Activated T-helper 1 cell treated with anti-CD3 and anti-CD28 coated beads, Interleukin-12 subunit alpha, Interleukin-12 subunit beta, Interleukin-2, Interleukin-4 antibody, amounts not matched to agents 30 ng/mL and 10 ng/mL and 1 ng/mL, durations not matched to agents 14 hours and 24 hours and 36 hours (primary cell): ENCODE measurements at regions of chr13 and their contacts with region 1.

Region 1: DNA sequence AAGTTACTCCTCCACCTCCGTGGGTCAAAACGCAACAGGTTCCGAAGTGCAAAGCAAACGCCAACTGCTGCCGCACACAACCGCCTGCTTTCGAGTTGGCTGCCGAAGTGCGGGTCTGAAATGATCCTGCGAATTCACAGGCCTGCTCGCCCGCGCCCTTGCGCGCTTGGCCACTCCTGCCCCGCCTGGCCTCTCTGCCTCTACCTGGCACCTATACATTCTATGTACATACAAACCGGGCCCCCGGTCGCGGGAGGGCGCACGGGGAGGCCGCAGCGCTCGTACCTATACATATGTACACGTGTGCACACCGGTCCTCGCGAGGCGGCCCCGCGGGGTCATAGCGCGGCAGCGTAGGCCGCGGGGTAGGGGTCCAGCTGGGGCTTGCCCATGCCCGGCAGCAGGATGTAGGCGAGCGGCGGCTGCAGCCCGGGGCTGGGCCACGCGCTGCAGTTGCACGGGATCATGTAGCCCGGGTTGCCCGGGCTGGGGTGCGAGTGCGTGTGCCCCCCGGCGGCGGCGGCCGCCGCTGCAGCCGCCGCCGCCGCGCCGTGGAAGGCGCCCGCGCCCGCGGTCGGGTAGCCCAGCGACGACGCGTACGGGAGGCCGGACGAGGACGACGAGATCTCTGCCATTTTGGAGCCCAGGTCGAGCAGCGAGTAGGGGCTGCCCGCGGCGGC is 1.3 kb downstream of the SOX21 start:
- DNase-seq: no peak
- H3K4me3 Mint-ChIP-seq: no peak overlapping the region
- H3K27ac Mint-ChIP-seq: peak overlapping the region; percentile 73
- H3K4me1 Mint-ChIP-seq: peaks cover 10% of the 10 kb centered on the region
- H3K27me3 Mint-ChIP-seq: peaks cover 73% of the 10 kb centered on the region

Region 2: GRCh38 chr13:93279982-93280381 is 1431.0 kb before region 1 on chr13:
- intact Hi-C with region 1: no loop called
- DNase-seq: no peak
- H3K4me3 Mint-ChIP-seq: no peak overlapping the region
- H3K27ac Mint-ChIP-seq: no peak overlapping the region
- H3K4me1 Mint-ChIP-seq: no peaks in the 10 kb centered on the region
- H3K27me3 Mint-ChIP-seq: no peaks in the 10 kb centered on the region

Region 3: DNA sequence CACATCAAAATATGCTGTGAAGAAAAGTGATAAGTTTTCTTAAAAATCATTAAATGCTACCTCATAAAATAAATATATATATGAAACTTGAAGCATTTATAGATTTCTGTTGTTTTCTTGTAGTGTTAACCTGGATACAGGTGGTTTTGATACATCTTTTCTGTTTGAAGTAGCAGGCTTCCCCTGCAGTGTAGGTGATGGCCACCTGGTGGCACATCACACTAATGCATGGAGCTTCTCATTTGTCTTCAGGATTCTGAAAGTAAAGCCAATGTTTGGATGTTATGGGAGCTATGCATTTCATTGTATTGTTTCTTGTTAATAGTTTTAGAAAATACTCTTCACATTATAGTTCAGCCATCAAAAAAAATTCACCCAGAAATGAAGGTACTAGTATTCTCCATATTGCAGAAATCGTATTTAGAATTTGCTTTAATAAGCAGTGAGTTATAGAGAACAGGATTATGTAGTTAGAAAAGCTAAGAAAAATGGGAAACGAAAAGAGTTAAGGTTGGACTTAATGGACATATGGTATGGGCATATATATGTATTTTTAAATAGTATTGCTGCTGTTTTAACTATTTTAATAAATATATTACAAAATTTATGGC is 90.6 kb before region 1 on chr13:
- intact Hi-C with region 1: loop called (anchors 2 kb)
- DNase-seq: no peak
- H3K4me3 Mint-ChIP-seq: no peak overlapping the region
- H3K27ac Mint-ChIP-seq: no peak overlapping the region
- H3K4me1 Mint-ChIP-seq: peaks cover 21% of the 10 kb centered on the region
- H3K27me3 Mint-ChIP-seq: no peaks in the 10 kb centered on the region

Region 4: DNA sequence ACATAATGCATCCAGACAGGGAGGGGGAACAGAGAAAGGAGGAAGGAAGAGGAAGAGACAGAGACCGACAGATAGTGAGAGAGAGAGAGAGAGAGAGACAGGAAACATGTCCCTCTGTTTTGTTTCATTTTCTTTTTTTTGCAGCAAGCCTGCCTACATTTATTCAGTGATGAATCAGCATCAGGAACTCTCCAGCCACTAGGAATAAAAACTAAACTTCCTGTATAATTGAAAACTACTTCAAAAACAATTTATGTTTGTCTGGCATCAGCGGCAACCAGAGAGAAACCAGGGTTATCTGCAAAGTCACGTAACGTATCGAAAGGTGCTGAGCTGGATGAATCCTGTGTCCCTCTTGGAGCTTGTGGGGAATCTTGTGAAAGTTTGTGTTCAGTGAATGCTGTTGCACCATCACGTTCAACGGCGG is 150.0 kb after region 1 on chr13:
- intact Hi-C with region 1: loop called (anchors 10 kb)
- DNase-seq: no peak
- H3K4me3 Mint-ChIP-seq: peak overlapping the region; percentile 78
- H3K27ac Mint-ChIP-seq: peak overlapping the region; percentile 45
- H3K4me1 Mint-ChIP-seq: peaks cover 8% of the 10 kb centered on the region
- H3K27me3 Mint-ChIP-seq: peaks cover 7% of the 10 kb centered on the region

Region 5: DNA sequence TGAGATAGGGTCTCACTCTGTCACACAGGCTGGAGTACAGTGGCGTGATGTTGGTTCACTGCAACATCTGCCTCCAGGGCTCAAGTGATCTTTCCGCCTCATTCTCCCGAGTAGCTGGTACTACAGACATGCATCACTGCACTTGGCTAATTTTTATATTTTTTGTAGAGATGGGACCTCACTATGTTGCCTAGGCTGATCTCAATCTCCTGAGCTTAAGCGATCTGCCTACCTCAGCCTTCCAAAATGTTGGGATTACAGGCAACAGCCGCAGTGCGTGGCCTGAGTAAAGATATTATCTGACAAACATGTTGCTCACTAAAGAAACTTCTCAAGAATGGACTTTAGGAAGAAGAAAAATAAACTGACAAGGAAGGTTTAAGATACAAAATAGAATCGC is 715.6 kb after region 1 on chr13:
- intact Hi-C with region 1: no loop called
- DNase-seq: no peak
- H3K4me3 Mint-ChIP-seq: no peak overlapping the region
- H3K27ac Mint-ChIP-seq: no peak overlapping the region
- H3K4me1 Mint-ChIP-seq: no peaks in the 10 kb centered on the region
- H3K27me3 Mint-ChIP-seq: peaks cover 4% of the 10 kb centered on the region

Region 6: GRCh38 chr13:95480131-95480545 is 769.1 kb after region 1 on chr13:
- intact Hi-C with region 1: loop called (anchors 2 kb)
- DNase-seq: no peak
- H3K4me3 Mint-ChIP-seq: peak overlapping the region; percentile 21
- H3K27ac Mint-ChIP-seq: peak overlapping the region; percentile 23
- H3K4me1 Mint-ChIP-seq: peaks cover 25% of the 10 kb centered on the region
- H3K27me3 Mint-ChIP-seq: peaks cover 6% of the 10 kb centered on the region

Region 7: GRCh38 chr13:95579303-95579702 is 868.3 kb after region 1 on chr13:
- intact Hi-C with region 1: no loop called
- DNase-seq: no peak
- H3K4me3 Mint-ChIP-seq: no peak overlapping the region
- H3K27ac Mint-ChIP-seq: no peak overlapping the region
- H3K4me1 Mint-ChIP-seq: no peaks in the 10 kb centered on the region
- H3K27me3 Mint-ChIP-seq: no peaks in the 10 kb centered on the region

Region 8: GRCh38 chr13:95644601-95645052 is 933.6 kb after region 1 on chr13 and contains the start of gene DZIP1:
- intact Hi-C with region 1: loop called (anchors 10 kb)
- DNase-seq: no peak
- H3K4me3 Mint-ChIP-seq: peak within 1 kb of the TSS; percentile 72
- H3K27ac Mint-ChIP-seq: no peak within 1 kb of the TSS
- H3K4me1 Mint-ChIP-seq: peaks cover 8% of the 10 kb centered on the region
- H3K27me3 Mint-ChIP-seq: peaks cover 54% of the 10 kb centered on the region
- total RNA-seq, gene DZIP1: 0.07 and 0.49 TPM in 2 replicates